ENCODE measurements at regions of chr1 and their contacts with region 1.

Region 1: DNA sequence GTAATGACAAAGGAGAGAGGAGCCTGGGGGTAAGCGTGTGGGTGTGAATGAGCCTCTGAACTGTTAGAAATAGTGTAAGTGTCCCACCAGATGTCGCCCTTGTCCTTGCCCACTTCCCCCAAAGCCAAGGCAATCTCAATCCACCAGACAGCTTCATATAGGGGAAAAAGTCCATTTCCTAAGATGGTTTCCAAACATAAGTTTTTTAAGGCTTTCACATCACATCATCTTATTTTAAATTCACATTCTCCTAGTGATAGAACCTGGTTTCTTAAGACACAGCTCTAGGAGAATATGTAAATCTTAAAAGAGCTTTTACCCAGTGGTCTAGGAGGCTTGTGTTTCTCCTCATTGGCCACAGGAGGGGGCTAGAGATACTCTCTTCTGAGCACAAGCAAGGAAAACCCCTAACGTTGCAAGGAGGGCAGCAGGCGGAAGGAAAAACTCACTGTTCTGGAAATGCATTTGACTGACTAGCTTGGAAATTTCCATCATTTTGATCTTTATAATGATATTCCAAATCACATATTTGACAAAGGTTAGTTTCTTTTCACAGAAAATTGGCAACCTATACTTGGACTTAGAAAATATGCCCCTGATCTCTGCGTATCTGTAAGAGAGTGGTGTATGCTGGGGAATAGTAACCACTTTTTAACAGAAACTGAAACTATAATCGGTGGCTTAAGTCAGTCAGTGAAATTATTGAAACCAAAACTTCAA is 51.9 kb upstream of the LPAR3 start:
- DNase-seq: peak; percentile 89
- ATAC-seq: peak; percentile 93
- H3K4me3 Mint-ChIP-seq: peak overlapping the region; percentile 79
- H3K27ac Mint-ChIP-seq: peak overlapping the region; percentile 73
- H3K4me1 Mint-ChIP-seq: peaks cover 15% of the 10 kb centered on the region
- H3K27me3 Mint-ChIP-seq: no peaks in the 10 kb centered on the region

Region 2: GRCh38 chr1:84653130-84653677 is 291.7 kb before region 1 on chr1:
- CTCF ChIA-PET with region 1: no interaction called
- POLR2A ChIA-PET with region 1: no interaction called
- DNase-seq: no peak
- ATAC-seq: no peak
- H3K4me3 Mint-ChIP-seq: no peak overlapping the region
- H3K27ac Mint-ChIP-seq: no peak overlapping the region
- H3K4me1 Mint-ChIP-seq: peaks cover 3% of the 10 kb centered on the region
- H3K27me3 Mint-ChIP-seq: no peaks in the 10 kb centered on the region

Region 3: GRCh38 chr1:84742653-84743052 is 202.3 kb before region 1 on chr1:
- CTCF ChIA-PET with region 1: no interaction called
- POLR2A ChIA-PET with region 1: no interaction called
- DNase-seq: no peak
- ATAC-seq: no peak
- H3K4me3 Mint-ChIP-seq: no peak overlapping the region
- H3K27ac Mint-ChIP-seq: no peak overlapping the region
- H3K4me1 Mint-ChIP-seq: no peaks in the 10 kb centered on the region
- H3K27me3 Mint-ChIP-seq: peaks cover 3% of the 10 kb centered on the region

Region 4: DNA sequence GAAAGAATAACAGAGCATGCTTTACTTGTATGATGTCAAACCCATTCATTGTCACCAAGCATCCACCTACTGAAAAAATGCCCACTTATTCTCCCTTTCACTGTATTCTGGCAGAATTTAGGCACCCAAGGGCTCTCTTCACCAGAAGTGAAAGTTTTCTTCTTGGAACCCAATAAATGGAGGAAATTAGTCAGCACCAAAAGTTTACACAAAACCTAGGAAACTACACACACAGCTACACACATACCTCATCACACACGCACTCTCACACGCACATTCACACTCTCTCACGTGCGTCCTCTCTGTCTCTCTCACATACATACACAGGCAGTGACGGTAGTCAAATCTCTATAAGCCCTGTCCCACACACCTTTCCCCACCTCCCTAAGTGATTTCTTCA is 14.4 kb after region 1 on chr1:
- CTCF ChIA-PET with region 1: interaction called, 66 read pairs
- POLR2A ChIA-PET with region 1: interaction called, 4 read pairs
- DNase-seq: peak; percentile 32
- ATAC-seq: peak; percentile 89
- H3K4me3 Mint-ChIP-seq: no peak overlapping the region
- H3K27ac Mint-ChIP-seq: no peak overlapping the region
- H3K4me1 Mint-ChIP-seq: peaks cover 11% of the 10 kb centered on the region
- H3K27me3 Mint-ChIP-seq: no peaks in the 10 kb centered on the region

Region 5: DNA sequence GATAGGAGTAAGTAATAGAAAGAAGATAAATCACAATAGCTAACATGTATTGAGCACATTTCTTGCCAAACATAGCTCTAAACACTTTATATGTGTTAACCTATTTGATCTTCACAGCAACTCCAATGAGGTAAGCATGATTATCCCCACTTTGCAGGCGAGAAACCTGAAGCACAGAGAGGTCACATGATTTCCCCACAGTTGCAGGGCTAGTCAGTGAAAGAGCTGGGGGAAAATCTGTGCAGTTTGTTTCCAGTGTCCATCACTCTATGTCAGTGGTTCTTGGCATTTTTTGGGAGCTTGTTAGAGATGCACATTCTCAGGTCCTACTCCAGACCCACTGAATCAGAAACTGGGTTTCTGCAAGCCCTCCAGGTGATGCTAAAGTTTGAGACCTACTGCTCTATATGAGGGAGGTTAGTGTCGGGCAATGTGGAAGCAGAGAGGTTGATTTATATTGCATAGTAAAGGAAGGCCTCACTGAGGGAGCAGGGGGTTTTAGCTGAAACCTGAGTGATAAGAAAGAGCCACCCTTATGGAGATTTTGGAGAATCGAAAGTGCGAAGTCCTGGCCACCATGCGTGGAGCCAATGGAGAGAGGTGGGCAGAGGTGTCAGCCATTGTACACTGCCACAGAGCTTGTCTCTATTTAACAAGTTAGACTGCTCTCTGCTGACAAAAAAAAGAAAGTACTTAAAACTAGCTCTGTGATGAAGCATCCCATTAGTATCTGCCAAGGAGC is 82.5 kb after region 1 on chr1:
- CTCF ChIA-PET with region 1: interaction called, 279 read pairs
- POLR2A ChIA-PET with region 1: interaction called, 12 read pairs
- DNase-seq: peak; percentile 34
- ATAC-seq: peak; percentile 84
- H3K4me3 Mint-ChIP-seq: no peak overlapping the region
- H3K27ac Mint-ChIP-seq: peak overlapping the region; percentile 20
- H3K4me1 Mint-ChIP-seq: peaks cover 10% of the 10 kb centered on the region
- H3K27me3 Mint-ChIP-seq: no peaks in the 10 kb centered on the region

Region 6: GRCh38 chr1:85109475-85109874 is 164.5 kb after region 1 on chr1:
- CTCF ChIA-PET with region 1: interaction called, 20 read pairs
- POLR2A ChIA-PET with region 1: no interaction called
- DNase-seq: peak; percentile 48
- ATAC-seq: peak; percentile 85
- H3K4me3 Mint-ChIP-seq: no peak overlapping the region
- H3K27ac Mint-ChIP-seq: no peak overlapping the region
- H3K4me1 Mint-ChIP-seq: no peaks in the 10 kb centered on the region
- H3K27me3 Mint-ChIP-seq: peaks cover 16% of the 10 kb centered on the region

Region 7: DNA sequence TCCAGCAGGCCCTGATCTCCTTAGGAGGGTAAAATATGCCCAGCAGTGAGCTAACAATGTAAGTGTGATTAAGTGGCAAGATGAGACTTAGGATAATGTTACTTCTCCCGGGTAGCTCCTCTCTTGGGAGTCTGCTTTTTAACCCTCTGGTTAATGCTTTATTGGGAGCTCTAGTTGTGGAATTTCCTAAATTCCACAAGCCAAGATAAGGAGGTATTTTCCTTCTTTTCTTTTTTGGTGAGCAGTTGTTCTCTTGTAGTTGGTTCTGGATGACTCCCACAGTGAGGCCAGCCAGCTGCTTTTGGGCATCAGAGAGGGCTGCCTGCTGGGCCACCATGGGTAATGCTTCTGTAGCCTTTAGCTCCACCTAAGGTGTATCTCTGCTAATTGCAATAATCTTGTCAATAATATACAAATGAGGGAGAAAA is 295.3 kb after region 1 on chr1:
- CTCF ChIA-PET with region 1: interaction called, 41 read pairs
- POLR2A ChIA-PET with region 1: no interaction called
- DNase-seq: peak; percentile 31
- ATAC-seq: no peak
- H3K4me3 Mint-ChIP-seq: no peak overlapping the region
- H3K27ac Mint-ChIP-seq: peak overlapping the region; percentile 61
- H3K4me1 Mint-ChIP-seq: peaks cover 22% of the 10 kb centered on the region
- H3K27me3 Mint-ChIP-seq: peaks cover 5% of the 10 kb centered on the region

Region 8: DNA sequence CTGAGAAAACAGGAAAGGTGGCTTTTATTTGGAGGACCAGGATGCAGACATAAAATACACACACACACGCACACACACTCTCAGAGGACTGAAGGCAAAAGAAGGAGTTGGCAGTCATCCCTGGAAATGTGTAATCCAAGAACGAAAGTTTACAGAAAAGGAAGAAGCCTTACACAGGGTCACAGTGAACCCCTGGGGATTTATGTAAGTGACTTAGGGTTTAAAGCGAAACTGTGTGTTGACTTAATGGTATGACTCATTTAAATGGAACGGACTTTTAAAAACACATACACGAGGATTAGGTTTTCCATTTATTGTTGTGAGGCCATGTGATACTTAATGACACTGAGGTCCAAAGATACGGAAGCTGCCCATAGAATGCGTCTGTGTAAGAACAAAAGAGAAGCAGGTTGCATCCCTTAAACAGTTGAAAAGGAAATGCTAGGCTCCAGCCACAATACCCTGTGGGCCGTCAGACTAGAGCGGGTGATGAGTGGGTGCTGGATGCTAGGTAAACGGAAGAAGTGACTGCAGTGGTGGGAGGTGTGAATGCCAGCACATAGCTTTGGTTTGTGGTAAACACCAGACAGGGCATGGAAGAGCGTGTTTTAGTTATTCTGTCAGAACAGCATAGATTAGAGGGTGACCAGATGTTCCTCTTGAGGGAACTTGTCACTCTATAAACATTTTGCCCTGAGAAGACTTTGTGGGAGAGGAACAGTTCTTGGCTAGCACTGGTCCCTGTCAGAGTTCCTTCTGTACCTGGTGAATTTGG is 353.1 kb after region 1 on chr1:
- CTCF ChIA-PET with region 1: interaction called, 12 read pairs
- POLR2A ChIA-PET with region 1: no interaction called
- DNase-seq: peak; percentile 78
- ATAC-seq: peak; percentile 94
- H3K4me3 Mint-ChIP-seq: peak overlapping the region; percentile 8
- H3K27ac Mint-ChIP-seq: peak overlapping the region; percentile 3
- H3K4me1 Mint-ChIP-seq: peaks cover 22% of the 10 kb centered on the region
- H3K27me3 Mint-ChIP-seq: peaks cover 38% of the 10 kb centered on the region

Measured in activated CD8-positive, alpha-beta T cell treated with anti-CD3 and anti-CD28 coated beads, Interleukin-2, amount 10 ng/mL, durations not matched to agents 7 days and 5 days (primary cell).